ENCODE measurements at regions of chr19 and their contacts with region 1.

Region 1: GRCh38 chr19:13597640-13598039 is 91.4 kb upstream of the CACNA1A start:
- DNase-seq: peak; percentile 57
- ATAC-seq: peak; percentile 98
- H3K4me3 ChIP-seq: no peak overlapping the region
- H3K27ac ChIP-seq: no peak overlapping the region
- H3K4me1 ChIP-seq: no peaks in the 10 kb centered on the region
- H3K27me3 ChIP-seq: 0 out of 2 replicates have a peak, but pooled peaks cover 4% of the 10 kb centered on the region
- CTCF ChIP-seq: peak; percentile 59 to 72 (median 64)
- POLR2A ChIP-seq: no peak
- RAD21 ChIP-seq: peak; percentile 95

Region 2: DNA sequence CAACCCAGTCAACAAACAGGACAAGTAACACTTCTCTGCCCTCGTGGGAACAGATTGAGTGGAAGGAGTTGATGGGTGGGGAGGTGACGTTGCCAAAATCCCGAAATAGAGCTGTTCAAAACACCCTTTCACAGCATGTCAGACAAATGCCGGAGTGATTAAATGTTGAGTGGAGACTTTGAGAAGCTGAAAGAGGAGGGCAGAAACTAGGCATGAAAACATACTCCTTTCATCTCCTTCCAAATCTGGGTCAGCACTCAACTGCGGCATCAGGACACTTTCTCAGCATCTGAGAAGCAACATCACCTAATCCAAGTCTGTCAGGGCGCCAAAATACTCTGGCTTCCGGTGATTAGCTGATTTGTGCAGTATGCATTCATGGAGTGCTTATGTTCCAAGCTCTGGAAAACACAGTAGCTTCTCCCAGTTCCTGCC is 115.1 kb after region 1 on chr19:
- CTCF ChIA-PET with region 1: no interaction called
- POLR2A ChIA-PET with region 1: no interaction called
- RAD21 ChIA-PET with region 1: no interaction called
- intact Hi-C with region 1: no loop called
- DNase-seq: no peak
- ATAC-seq: no peak
- H3K4me3 ChIP-seq: no peak overlapping the region
- H3K27ac ChIP-seq: no peak overlapping the region
- H3K4me1 ChIP-seq: no peaks in the 10 kb centered on the region
- H3K27me3 ChIP-seq: no peaks in the 10 kb centered on the region
- CTCF ChIP-seq: no peak
- POLR2A ChIP-seq: no peak
- RAD21 ChIP-seq: no peak

Region 3: GRCh38 chr19:13774217-13775191 is 176.9 kb after region 1 on chr19 and contains the start of gene C19orf53:
- CTCF ChIA-PET with region 1: no interaction called
- POLR2A ChIA-PET with region 1: no interaction called
- RAD21 ChIA-PET with region 1: no interaction called
- intact Hi-C with region 1: loop called (anchors 5 kb)
- DNase-seq: peak; percentile 80
- ATAC-seq: peak; percentile 94
- H3K4me3 ChIP-seq: peak within 1 kb of the TSS; percentile 74 to 99
- H3K27ac ChIP-seq: peak within 1 kb of the TSS; percentile 80
- H3K4me1 ChIP-seq: peaks cover 13 to 24% of the 10 kb centered on the region in 2 experiments
- H3K27me3 ChIP-seq: no peaks in the 10 kb centered on the region
- CTCF ChIP-seq: no peak
- POLR2A ChIP-seq: peak; percentile 68
- RAD21 ChIP-seq: no peak
- total RNA-seq, gene C19orf53: 115 TPM

Measured in HCT116 (cell line).